Astrocyte of the cerebellum (primary cell): ENCODE measurements at regions of chr16 and their contacts with region 1.

Region 1: GRCh38 chr16:87956365-87957231 is 5.4 kb downstream of the BANP start:
- DNase-seq: peak; percentile 70
- H3K4me3 ChIP-seq: no peak overlapping the region
- CTCF ChIP-seq: peak; percentile 63

Region 2: DNA sequence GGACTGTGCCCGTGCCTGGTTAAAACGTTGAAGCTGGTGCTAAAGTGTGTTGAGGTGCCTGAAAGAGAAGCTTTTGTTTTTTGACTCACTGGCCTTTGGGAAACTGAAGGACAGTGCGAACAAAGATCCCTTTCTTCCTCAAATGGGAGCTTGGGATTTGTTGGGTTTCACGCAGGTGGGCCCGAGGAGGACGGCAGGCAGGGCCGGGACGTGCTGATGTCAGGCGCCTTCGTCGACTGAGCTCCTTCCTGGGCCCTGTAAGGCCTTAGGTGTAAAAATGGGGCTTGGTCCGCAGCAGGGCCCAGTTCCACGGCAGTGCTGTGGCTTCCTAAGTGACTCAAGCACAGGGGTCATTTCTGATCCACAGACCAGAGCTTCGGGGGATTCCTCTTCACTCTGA is 101.5 kb after region 1 on chr16:
- in situ Hi-C with region 1: loop called (anchors 5 kb)
- DNase-seq: no peak
- H3K4me3 ChIP-seq: no peak overlapping the region
- CTCF ChIP-seq: no peak

Region 3: DNA sequence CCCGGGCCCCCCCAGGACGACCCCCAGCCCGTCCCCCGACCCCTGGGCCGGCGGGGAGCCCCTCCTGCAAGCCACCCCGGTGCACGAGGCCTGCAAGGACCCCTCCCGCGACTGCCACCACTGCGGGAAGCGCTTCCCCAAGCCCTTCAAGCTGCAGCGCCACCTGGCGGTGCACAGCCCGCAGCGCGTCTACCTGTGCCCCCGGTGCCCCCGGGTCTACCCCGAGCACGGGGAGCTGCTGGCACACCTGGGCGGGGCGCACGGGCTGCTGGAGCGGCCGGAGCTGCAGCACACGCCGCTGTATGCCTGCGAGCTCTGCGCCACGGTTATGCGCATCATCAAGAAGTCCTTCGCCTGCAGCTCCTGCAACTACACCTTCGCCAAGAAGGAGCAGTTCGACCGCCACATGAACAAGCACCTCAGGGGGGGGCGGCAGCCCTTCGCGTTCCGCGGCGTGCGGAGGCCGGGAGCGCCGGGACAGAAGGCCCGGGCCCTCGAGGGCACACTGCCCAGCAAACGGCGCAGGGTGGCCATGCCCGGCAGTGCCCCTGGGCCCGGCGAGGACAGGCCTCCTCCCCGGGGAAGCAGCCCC is 480.9 kb after region 1 on chr16:
- in situ Hi-C with region 1: loop called (anchors 5 kb)
- DNase-seq: no peak
- H3K4me3 ChIP-seq: no peak overlapping the region
- CTCF ChIP-seq: peak; percentile 85